ENCODE measurements at regions of chr20 and their contacts with region 1.

Region 1: DNA sequence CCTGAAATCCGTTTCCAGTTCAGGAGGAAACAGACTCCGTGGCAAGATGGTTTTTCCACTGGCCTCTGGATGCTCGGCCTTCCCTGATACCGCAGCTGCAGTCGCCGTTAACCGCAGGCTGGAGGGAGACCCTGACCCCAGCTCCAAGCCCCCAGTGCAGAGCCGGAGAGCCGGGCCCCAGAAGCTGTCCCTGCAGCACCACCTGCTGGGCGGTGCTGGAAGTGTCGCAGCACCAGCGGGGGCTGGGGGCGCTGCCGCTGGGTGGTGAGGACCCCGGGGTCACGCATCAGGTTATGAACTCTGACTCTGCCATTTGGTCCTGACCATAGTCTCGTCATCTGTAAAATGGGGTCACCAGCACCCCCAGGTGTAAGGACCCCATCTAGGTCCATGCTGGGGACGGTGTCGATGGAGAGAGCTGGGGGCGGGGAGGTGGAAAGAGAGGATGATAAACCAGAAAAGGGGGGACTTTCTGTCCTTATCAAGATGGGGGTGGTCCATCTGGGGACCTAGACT is 20.7 kb upstream of the CHRNA4 start:
- DNase-seq: peak; percentile 22
- H3K4me3 ChIP-seq: no peak overlapping the region
- H3K27ac ChIP-seq: no peak overlapping the region
- H3K4me1 ChIP-seq: no peaks in the 10 kb centered on the region
- H3K27me3 ChIP-seq: peaks cover 5% of the 10 kb centered on the region
- CTCF ChIP-seq: peak; percentile 98

Region 2: DNA sequence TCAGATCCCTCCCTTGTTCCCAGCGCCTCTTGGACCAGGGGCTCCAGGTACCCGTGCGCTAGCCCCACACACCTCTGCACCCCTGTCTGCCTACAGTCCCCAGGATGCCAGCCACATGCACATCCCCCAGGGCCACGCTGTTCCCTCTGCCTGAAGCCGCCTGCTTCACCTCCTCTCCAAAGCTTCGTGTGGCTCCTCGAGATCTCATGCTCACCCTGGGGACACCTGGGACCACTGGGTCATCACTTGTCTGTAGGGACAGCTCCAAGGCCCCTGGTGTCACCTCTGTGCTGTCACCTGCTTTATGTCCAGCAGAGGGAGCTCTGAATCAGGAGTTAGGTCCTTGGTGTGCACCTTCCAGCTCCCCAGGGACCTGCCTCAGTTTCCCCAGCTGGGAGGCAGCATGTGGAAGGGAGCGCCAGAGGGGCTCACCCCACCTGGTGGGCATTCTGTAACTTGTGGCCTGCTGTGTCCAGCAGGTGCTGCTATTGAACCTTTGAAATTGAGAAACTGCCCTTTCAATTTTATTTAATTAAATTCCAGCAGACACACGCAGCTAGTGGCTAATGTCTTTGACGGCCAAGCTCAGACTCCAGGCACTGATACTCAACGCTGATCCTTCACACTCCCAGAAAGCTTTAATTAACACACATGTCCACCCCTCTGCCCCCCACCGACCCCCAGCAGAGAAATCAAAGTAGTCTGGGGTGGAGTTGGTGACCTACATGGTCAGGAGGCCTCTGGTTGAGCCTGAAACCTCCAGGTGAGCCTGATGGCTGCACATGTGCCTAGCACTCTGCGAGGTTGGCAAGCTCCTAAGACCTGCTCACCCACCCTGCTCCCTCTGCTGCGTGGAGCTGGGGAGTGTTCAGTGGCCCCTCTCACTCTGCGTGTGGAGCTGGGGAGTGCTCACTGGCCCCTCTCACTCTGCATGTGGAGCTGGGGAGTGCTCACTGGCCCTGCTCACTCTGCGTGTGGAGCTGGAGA is 158.4 kb before region 1 on chr20:
- CTCF ChIA-PET with region 1: interaction called, 25 read pairs
- POLR2A ChIA-PET with region 1: no interaction called
- intact Hi-C with region 1: no loop called
- DNase-seq: peak; percentile 46
- H3K4me3 ChIP-seq: no peak overlapping the region
- H3K27ac ChIP-seq: no peak overlapping the region
- H3K4me1 ChIP-seq: no peaks in the 10 kb centered on the region
- H3K27me3 ChIP-seq: peaks cover 14% of the 10 kb centered on the region
- CTCF ChIP-seq: peak; percentile 81

Region 3: GRCh38 chr20:63309261-63310071 is 72.4 kb before region 1 on chr20:
- CTCF ChIA-PET with region 1: interaction called, 45 read pairs
- POLR2A ChIA-PET with region 1: no interaction called
- intact Hi-C with region 1: loop called (anchors 1 kb)
- DNase-seq: peak; percentile 36
- H3K4me3 ChIP-seq: no peak overlapping the region
- H3K27ac ChIP-seq: no peak overlapping the region
- H3K4me1 ChIP-seq: no peaks in the 10 kb centered on the region
- H3K27me3 ChIP-seq: no peaks in the 10 kb centered on the region
- CTCF ChIP-seq: peak; percentile 88

Region 4: DNA sequence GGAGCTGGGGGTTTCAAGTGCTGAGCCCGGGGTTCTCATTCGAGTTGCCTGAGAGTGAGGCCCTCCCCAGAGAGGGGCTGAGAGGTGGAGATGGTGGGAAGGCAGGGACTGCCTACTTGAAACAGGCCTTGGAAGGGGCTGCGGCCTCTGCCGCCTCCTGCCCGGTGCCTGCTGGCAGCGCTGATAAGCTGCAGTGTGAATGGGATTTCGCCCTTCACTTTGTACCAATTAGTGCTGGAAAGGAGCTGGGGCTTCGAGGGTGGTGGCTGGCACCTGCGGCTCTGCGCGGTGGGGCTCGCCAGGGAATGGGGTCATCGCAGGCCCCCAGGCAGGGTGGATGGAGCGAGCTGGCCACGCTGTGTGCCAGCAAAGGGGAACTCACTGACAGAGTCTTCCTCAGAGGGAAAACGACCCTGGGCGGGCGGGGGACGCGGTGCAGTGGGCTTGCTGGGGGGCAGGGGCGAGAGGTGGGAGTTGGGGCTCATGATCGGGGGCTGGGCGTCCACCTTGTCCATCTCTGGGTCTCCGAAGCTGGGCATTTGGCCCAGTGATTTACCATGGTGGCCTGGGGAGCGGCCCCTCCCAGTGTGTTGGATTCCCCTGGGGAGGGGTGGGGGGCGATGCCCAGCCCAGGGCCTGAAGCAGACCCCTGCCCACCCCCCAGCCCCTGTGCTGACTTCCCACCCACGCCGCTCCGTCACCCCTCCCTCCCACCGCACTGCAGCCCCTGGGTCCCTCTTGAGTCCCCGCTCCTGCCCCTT is 66.0 kb before region 1 on chr20:
- CTCF ChIA-PET with region 1: interaction called, 14 read pairs
- POLR2A ChIA-PET with region 1: no interaction called
- intact Hi-C with region 1: no loop called
- DNase-seq: no peak
- H3K4me3 ChIP-seq: no peak overlapping the region
- H3K27ac ChIP-seq: no peak overlapping the region
- H3K4me1 ChIP-seq: no peaks in the 10 kb centered on the region
- H3K27me3 ChIP-seq: no peaks in the 10 kb centered on the region
- CTCF ChIP-seq: no peak